Heart right ventricle (tissue), 16 donors: ENCODE measurements at regions of chr12 and their contacts with region 1.

Region 1: GRCh38 chr12:93766796-93767523 is 89.8 kb downstream of the CRADD start:
- DNase-seq: peak in 1 of 2 donors; percentile 69
- ATAC-seq: peak; percentile 71 to 91 (median 87)
- H3K4me3 ChIP-seq: no peak overlapping the region
- H3K27ac ChIP-seq: peak overlapping the region; percentile 5 to 77 (median 63)
- H3K4me1 ChIP-seq: peaks cover 7 to 69% (median 41%) of the 10 kb centered on the region in 9 donors
- H3K27me3 ChIP-seq: no peaks in the 10 kb centered on the region
- CTCF ChIP-seq: peak; percentile 30 to 83 (median 68)

Region 2: DNA sequence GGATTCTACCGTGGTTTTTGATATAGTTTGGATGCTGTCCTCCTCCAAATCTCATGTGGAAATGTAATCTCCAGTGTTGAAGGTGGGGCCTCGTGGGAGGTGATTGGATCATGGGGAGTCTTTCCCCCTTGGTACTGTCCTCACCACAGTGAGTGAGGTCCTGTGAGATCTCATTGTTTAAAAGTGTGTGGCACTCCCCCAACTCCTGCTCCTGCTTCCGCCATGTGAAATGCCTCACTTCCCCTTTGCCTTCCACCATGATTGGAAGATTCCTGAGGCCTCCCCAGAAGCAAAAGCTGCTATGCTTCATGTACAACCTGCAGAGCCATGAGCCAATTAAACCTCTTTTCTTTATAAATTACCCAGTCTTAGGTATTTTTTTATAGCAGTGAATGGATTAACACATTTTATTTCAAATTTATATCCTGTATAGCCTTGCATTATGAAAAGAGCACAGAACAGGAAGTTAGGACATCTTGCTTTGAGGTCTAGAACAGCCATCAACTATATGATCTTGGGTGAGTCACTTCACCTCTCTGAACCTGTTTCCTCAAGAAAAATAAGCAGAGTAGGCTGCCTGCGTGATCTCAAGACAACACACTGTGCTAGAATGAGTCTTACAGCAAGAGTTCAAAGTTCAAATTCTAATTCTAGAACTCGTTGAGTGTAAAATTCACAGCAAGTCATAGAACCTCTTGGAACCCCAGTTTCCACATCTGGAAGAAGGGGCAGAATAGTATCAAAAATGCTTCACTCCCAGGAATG is 677.0 kb before region 1 on chr12:
- intact Hi-C with region 1: no loop called
- DNase-seq: no peak
- ATAC-seq: no peak
- H3K4me3 ChIP-seq: no peak overlapping the region
- H3K27ac ChIP-seq: no peak overlapping the region
- H3K4me1 ChIP-seq: peaks cover 0 to 7% (median 0%) of the 10 kb centered on the region in 9 donors
- H3K27me3 ChIP-seq: no peaks in the 10 kb centered on the region
- CTCF ChIP-seq: no peak

Region 3: DNA sequence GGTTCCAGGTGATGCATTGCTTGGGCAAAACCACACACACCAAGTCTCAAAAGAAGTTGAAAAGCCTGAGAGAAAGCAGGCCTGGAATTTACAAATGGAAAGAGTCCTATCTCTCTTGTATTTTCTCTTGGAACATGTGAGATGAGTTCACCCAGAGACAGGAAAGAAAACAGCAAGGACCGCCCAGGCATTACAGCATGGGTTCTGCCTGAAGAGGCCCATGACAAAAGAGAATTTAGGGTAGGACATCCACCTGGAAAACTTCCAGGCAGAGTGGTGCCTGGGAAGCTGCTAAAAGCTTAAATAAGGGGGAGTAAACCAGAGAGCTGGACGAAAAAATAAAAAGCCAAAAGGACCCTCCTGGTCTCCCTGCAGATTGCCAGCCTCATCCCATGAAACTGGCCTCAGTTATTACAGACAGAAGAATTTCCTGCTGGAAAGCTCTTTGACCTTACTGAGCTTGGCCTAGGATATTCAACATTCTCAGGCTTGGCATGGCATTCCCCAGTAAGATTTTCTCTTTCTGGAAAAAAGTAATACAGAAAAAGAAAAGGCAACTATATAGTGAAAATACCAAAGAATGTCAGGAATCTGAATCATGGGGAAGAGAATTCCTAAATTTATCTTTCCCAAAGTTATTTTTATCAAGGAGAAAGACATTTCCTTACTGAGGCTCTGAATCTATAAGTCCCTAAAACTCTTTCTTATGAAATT is 510.5 kb before region 1 on chr12:
- intact Hi-C with region 1: no loop called
- DNase-seq: no peak
- ATAC-seq: peak in 4 of 8 donors; percentile 55 to 77 (median 70)
- H3K4me3 ChIP-seq: no peak overlapping the region
- H3K27ac ChIP-seq: peak overlapping the region in 7 of 10 donors; percentile 11 to 75 (median 38)
- H3K4me1 ChIP-seq: peaks cover 0 to 18% (median 8%) of the 10 kb centered on the region in 9 donors
- H3K27me3 ChIP-seq: no peaks in the 10 kb centered on the region
- CTCF ChIP-seq: no peak

Region 4: DNA sequence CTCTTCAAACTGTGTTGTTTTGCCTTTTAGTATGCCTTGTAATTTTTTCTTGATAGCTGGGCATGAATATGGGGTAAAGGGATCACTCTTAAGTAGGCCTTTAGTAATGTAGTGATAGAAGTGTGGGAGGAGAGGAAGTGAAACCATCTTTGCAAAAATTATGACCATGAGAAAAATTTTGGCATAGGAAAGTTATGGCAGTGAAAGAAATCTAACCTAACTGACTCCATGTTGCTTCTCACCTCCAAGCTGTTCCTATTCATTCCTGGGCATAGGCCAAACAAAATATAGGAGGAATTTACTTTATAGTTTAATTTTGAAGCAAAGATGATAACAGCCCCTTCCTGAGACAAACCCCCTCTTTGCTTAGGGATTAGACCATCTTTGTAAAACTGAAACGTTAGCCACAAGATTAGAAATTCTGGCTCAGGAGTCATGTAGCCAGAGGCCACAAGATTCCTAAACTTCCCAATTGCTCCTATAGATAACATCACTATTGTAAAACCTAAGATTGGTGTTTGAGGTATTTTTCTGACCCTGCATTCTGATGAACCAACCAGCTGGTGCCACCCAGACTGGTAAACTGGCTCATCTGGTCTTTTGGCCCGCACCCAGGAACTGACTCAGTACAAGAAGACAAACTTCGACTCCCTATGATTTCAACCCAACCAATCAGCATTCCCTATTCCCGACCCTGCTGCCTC is 44.0 kb before region 1 on chr12:
- intact Hi-C with region 1: no loop called
- DNase-seq: no peak
- ATAC-seq: no peak
- H3K4me3 ChIP-seq: no peak overlapping the region
- H3K27ac ChIP-seq: no peak overlapping the region
- H3K4me1 ChIP-seq: peaks cover 0 to 19% (median 8%) of the 10 kb centered on the region in 9 donors
- H3K27me3 ChIP-seq: no peaks in the 10 kb centered on the region
- CTCF ChIP-seq: no peak

Region 5: DNA sequence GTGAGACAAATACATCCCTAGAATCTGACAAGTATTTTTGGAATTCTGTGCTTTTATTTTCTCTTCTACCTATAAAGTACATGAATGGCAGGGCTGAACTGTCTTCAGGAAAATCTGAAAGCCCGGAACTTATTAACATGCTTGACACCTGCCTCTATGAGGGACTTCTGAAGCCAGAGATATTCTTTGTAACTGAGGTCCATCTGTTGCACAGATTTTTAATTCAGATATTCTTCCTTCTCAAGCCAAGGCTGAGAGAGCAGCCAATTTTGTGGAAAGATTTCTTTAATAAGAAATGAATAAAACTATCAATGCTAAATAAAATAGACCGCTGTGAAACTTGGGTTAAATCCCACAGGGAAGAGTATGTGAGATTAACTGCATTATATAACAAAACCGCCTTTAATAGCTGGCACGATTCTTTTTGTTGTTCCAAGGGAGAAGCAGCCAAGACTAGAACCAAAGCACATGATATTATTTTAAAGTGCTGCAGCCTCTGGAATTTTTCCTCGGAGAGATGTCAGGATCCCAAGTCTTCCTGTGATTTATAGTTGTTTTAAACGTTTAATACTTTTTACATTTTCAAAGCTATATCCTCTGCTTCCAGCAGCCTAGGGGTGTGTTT is 59.1 kb after region 1 on chr12:
- intact Hi-C with region 1: loop called in 1 of 10 experiments (anchors 5 kb)
- DNase-seq: no peak
- ATAC-seq: peak in 4 of 8 donors; percentile 26 to 56 (median 33)
- H3K4me3 ChIP-seq: peak overlapping the region in 1 of 10 donors; percentile 7
- H3K27ac ChIP-seq: peak overlapping the region; percentile 9 to 75 (median 52)
- H3K4me1 ChIP-seq: peaks cover 20 to 79% (median 51%) of the 10 kb centered on the region in 9 donors
- H3K27me3 ChIP-seq: no peaks in the 10 kb centered on the region
- CTCF ChIP-seq: no peak

Region 6: GRCh38 chr12:93972411-93973208 is 205.7 kb after region 1 on chr12:
- intact Hi-C with region 1: loop called in 6 of 10 experiments (anchors 2 to 10 kb)
- DNase-seq: no peak
- ATAC-seq: peak in 1 of 8 donors; percentile 34
- H3K4me3 ChIP-seq: no peak overlapping the region
- H3K27ac ChIP-seq: peak overlapping the region in 1 of 10 donors; percentile 5
- H3K4me1 ChIP-seq: peaks cover 0 to 26% (median 5%) of the 10 kb centered on the region in 9 donors
- H3K27me3 ChIP-seq: no peaks in the 10 kb centered on the region
- CTCF ChIP-seq: no peak

Region 7: DNA sequence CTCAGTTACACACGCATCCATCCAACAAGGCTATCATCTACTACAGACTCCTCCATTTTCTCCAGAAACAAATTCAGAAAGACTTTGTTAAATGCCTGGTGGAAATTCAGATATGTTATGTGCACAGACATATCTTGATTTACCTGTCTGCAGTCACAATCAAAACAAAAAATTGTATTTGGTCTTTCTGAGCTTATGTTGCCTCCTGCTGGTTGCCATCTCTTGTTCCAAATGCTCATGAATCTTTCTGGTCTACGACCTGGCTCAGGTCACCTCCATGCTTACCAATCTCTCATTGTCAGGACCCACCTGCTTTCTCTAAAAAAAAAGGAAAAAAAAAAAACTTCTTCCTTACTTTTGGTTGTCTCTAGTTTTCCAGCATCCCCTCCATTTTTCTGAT is 212.2 kb after region 1 on chr12:
- intact Hi-C with region 1: loop called (anchors 2 to 10 kb)
- DNase-seq: peak in 1 of 2 donors; percentile 19
- ATAC-seq: peak in 3 of 8 donors; percentile 49 to 57 (median 54)
- H3K4me3 ChIP-seq: no peak overlapping the region
- H3K27ac ChIP-seq: no peak overlapping the region
- H3K4me1 ChIP-seq: peaks cover 0 to 21% (median 3%) of the 10 kb centered on the region in 9 donors
- H3K27me3 ChIP-seq: no peaks in the 10 kb centered on the region
- CTCF ChIP-seq: peak in 8 of 9 donors; percentile 29 to 76 (median 58)